ENCODE measurements at regions of chr10 and their contacts with region 1.

Region 1: GRCh38 chr10:68348265-68348741 is 15.6 kb upstream of the PBLD start:
- DNase-seq: no peak
- H3K4me3 ChIP-seq: no peak overlapping the region
- H3K27me3 ChIP-seq: no peaks in the 10 kb centered on the region
- CTCF ChIP-seq: peak; percentile 81

Region 2: GRCh38 chr10:68082872-68083271 is 265.4 kb before region 1 on chr10:
- CTCF ChIA-PET with region 1: no interaction called
- POLR2A ChIA-PET with region 1: no interaction called
- DNase-seq: no peak
- H3K4me3 ChIP-seq: no peak overlapping the region
- H3K27me3 ChIP-seq: no peaks in the 10 kb centered on the region
- CTCF ChIP-seq: peak; percentile 55

Region 3: GRCh38 chr10:68332259-68333057 is 15.8 kb before region 1 on chr10 and contains the start of gene PBLD:
- CTCF ChIA-PET with region 1: interaction called, 15 read pairs
- POLR2A ChIA-PET with region 1: no interaction called
- DNase-seq: no peak
- H3K4me3 ChIP-seq: peak within 1 kb of the TSS; percentile 82
- H3K27me3 ChIP-seq: no peaks in the 10 kb centered on the region
- CTCF ChIP-seq: peak; percentile 63
- polyA plus RNA-seq, gene PBLD: 1.1 and 2.1 TPM in 2 replicates

Region 4: DNA sequence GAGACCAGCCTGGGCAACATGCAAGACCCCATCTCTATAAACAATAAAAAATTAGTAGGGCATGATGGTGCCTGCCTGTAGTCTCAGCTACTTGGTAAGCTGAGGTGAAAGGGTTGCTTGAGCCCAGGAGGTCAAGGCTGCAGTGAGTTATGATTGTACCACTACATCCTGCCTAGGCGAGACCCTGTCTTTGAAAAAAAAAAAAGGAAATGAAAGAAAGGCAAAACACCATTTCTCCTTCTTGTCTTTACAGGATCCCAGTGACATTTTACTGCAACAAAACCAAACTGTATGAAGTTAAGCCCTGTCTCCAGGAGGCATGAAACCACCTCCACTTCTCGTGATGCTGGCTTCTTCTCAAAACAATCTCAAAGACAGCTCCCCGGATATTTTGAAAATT is 14.3 kb after region 1 on chr10:
- CTCF ChIA-PET with region 1: interaction called, 18 read pairs
- POLR2A ChIA-PET with region 1: no interaction called
- DNase-seq: no peak
- H3K4me3 ChIP-seq: no peak overlapping the region
- H3K27me3 ChIP-seq: no peaks in the 10 kb centered on the region
- CTCF ChIP-seq: no peak

Region 5: GRCh38 chr10:68462536-68462935 is 114.2 kb after region 1 on chr10:
- CTCF ChIA-PET with region 1: no interaction called
- POLR2A ChIA-PET with region 1: no interaction called
- DNase-seq: no peak
- H3K4me3 ChIP-seq: no peak overlapping the region
- H3K27me3 ChIP-seq: no peaks in the 10 kb centered on the region
- CTCF ChIP-seq: no peak

Measured in BJ (cell line).